HCT116 (cell line): ENCODE measurements at regions of chr12 and their contacts with region 1.

Region 1: GRCh38 chr12:17528394-17528793 is 561.6 kb downstream of the RERGL start:
- DNase-seq: no peak
- ATAC-seq: no peak
- H3K4me3 ChIP-seq: no peak overlapping the region
- H3K27ac ChIP-seq: no peak overlapping the region
- H3K4me1 ChIP-seq: no peaks in the 10 kb centered on the region
- H3K27me3 ChIP-seq: no peaks in the 10 kb centered on the region
- CTCF ChIP-seq: no peak
- POLR2A ChIP-seq: no peak
- RAD21 ChIP-seq: peak; percentile 26; the same call in 1 of the 2 replicates

Region 2: GRCh38 chr12:16939871-16940306 is 588.5 kb before region 1 on chr12:
- CTCF ChIA-PET with region 1: no interaction called
- POLR2A ChIA-PET with region 1: no interaction called
- RAD21 ChIA-PET with region 1: no interaction called
- intact Hi-C with region 1: loop called (anchors 10 kb)
- DNase-seq: peak; percentile 78
- ATAC-seq: peak; percentile 96
- H3K4me3 ChIP-seq: no peak overlapping the region
- H3K27ac ChIP-seq: no peak overlapping the region
- H3K4me1 ChIP-seq: peaks cover 0 to 4% of the 10 kb centered on the region in 2 experiments; a peak in 1 of 4 replicates
- H3K27me3 ChIP-seq: no peaks in the 10 kb centered on the region
- CTCF ChIP-seq: peak; percentile 90 to 97 (median 92)
- POLR2A ChIP-seq: no peak
- RAD21 ChIP-seq: peak; percentile 79

Region 3: DNA sequence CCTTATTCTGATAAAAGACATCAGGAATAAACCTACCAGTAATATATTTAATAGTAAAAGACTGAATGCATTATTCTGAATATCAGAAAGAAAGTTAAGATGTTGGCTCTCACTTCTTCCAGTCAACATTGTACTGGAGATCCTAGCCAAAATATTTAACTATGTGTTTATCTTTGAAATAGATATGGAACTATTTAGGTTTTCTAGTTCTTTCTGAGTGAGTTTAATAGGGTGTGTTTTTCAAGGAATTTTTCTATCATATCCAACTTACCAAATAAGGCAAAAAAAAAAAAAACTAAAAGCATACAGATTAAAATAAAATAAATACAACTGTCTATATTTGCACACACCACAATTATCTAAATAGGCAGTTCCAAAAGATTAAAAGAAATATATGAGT is 443.6 kb before region 1 on chr12:
- CTCF ChIA-PET with region 1: no interaction called
- POLR2A ChIA-PET with region 1: no interaction called
- RAD21 ChIA-PET with region 1: no interaction called
- intact Hi-C with region 1: no loop called
- DNase-seq: no peak
- ATAC-seq: no peak
- H3K4me3 ChIP-seq: no peak overlapping the region
- H3K27ac ChIP-seq: no peak overlapping the region
- H3K4me1 ChIP-seq: no peaks in the 10 kb centered on the region
- H3K27me3 ChIP-seq: no peaks in the 10 kb centered on the region
- CTCF ChIP-seq: no peak
- POLR2A ChIP-seq: no peak
- RAD21 ChIP-seq: no peak

Region 4: GRCh38 chr12:17954788-17955187 is 426.4 kb after region 1 on chr12:
- CTCF ChIA-PET with region 1: no interaction called
- POLR2A ChIA-PET with region 1: no interaction called
- RAD21 ChIA-PET with region 1: no interaction called
- intact Hi-C with region 1: no loop called
- DNase-seq: no peak
- ATAC-seq: no peak
- H3K4me3 ChIP-seq: no peak overlapping the region
- H3K27ac ChIP-seq: no peak overlapping the region
- H3K4me1 ChIP-seq: no peaks in the 10 kb centered on the region
- H3K27me3 ChIP-seq: no peaks in the 10 kb centered on the region
- CTCF ChIP-seq: no peak
- POLR2A ChIP-seq: no peak
- RAD21 ChIP-seq: no peak